GM12878 (cell line): ENCODE measurements at regions of chr17 and their contacts with region 1.

Region 1: DNA sequence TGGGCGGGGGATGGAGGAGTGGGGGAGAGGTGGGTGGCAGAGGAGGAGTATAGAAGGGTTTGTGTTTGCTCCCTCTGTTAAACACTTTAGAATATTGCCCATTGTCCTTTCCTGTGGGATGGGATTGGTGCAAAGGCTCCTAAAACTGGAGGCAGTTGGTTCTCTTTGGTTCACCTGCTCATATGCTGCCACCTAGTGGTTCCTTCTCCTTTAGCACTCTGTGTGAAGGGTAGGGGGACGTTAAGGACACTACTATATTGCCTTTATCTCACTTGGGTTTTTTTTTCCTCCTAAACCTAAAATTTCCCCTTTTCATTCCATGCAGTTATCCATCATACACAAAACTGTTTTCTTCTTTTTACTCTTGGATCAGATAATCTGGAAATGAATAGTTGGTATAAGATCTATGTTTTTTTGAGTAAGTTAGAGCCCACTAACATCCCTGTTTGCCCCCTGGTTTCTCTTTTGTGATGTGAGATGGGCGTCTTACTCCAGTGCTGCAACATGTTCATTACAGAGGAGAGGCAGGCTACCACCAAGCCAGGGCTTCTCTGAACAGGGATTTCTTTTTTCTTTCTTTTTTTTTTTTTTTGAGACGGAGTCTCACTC is 23.8 kb downstream of the SNX11 start:
- DNase-seq: no peak
- ATAC-seq: peak; percentile 91
- H3K4me3 ChIP-seq: no peak overlapping the region
- H3K27ac ChIP-seq: no peak overlapping the region
- H3K4me1 ChIP-seq: no peaks in the 10 kb centered on the region
- H3K27me3 ChIP-seq: no peaks in the 10 kb centered on the region
- CTCF ChIP-seq: peak; percentile 76 to 88 (median 80)
- EP300 ChIP-seq: no peak
- POLR2A ChIP-seq: no peak
- RAD21 ChIP-seq: peak; percentile 91

Region 2: GRCh38 chr17:48101012-48101720 is 30.2 kb before region 1 on chr17 and contains the start of gene CBX1:
- CTCF ChIA-PET with region 1: interaction called, 102 read pairs
- POLR2A ChIA-PET with region 1: no interaction called
- RAD21 ChIA-PET with region 1: interaction called, 6 read pairs
- SMC1A ChIA-PET with region 1: interaction called, 15 read pairs
- in situ Hi-C with region 1: no loop called
- intact Hi-C with region 1: no loop called
- DNase-seq: peak; percentile 89
- ATAC-seq: peak; percentile 98
- H3K4me3 ChIP-seq: peak within 1 kb of the TSS; percentile 87
- H3K27ac ChIP-seq: peak within 1 kb of the TSS; percentile 80
- H3K4me1 ChIP-seq: peaks cover 23% of the 10 kb centered on the region
- H3K27me3 ChIP-seq: no peaks in the 10 kb centered on the region
- CTCF ChIP-seq: no peak
- EP300 ChIP-seq: no peak
- POLR2A ChIP-seq: peak; percentile 74
- RAD21 ChIP-seq: no peak
- polyA plus RNA-seq, gene CBX1: 11.8 to 20.3 TPM

Region 3: DNA sequence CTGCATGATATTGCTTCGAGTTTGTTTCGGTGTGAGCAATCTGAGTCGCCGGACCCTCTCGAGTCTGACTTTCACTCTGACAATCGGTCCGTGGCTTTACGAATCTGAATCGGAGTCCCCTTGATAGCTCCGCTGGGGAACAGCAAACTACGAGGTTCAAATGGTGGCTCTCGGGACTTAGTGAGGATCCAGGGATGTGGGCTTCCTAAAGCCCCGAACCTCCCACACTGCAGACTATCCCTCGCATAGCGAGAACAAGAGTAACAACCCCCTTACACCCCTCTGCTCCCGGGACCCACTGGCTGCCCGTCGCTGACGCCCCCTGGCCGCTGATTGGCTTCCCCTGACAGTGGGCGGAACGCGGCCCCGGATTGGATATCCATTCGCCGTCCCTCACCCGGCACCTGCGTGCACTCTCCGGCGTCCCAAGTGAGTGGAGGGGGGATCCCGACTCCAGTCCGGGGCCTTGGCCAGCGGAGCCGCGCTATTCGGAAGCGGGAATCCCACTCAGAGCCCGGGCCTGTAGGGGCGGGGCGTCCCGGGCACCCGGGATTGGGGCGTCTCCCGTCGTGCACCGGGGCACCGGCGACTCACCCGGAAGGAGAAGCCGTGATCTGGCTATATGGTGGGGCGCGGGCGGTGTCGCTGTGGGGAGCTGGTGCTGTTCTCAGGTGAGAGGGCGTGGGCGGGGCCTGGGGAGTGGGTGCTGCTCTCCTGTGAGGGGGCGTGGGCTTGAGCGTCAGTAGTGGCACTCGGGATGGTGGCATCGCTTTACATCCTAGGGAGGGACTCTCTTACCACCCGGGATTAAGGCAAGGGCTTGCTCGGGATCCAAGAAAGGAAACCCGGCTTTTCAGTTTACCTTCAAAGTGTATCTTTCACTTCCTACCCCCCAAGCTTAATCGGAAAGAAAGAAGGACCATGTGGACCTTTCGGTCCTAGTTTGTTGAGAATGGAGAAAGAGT is 23.9 kb before region 1 on chr17 and contains the start of gene SNX11:
- CTCF ChIA-PET with region 1: interaction called, 102 read pairs
- POLR2A ChIA-PET with region 1: interaction called, 15 read pairs
- RAD21 ChIA-PET with region 1: interaction called, 43 read pairs
- SMC1A ChIA-PET with region 1: interaction called, 42 read pairs
- in situ Hi-C with region 1: no loop called
- intact Hi-C with region 1: no loop called
- DNase-seq: no peak
- ATAC-seq: peak; percentile 88
- H3K4me3 ChIP-seq: peak within 1 kb of the TSS; percentile 97
- H3K27ac ChIP-seq: peak within 1 kb of the TSS; percentile 80
- H3K4me1 ChIP-seq: peaks cover 6% of the 10 kb centered on the region
- H3K27me3 ChIP-seq: no peaks in the 10 kb centered on the region
- CTCF ChIP-seq: peak in 2 of 3 experiments; percentile 7 to 20; a peak in 1 of 6 replicates
- EP300 ChIP-seq: no peak
- POLR2A ChIP-seq: peak; percentile 91
- RAD21 ChIP-seq: no peak
- polyA plus RNA-seq, gene SNX11: 61.3 to 75.6 TPM

Region 4: GRCh38 chr17:48113201-48113676 is 18.1 kb before region 1 on chr17:
- CTCF ChIA-PET with region 1: interaction called, 102 read pairs
- POLR2A ChIA-PET with region 1: interaction called, 15 read pairs
- RAD21 ChIA-PET with region 1: interaction called, 43 read pairs
- SMC1A ChIA-PET with region 1: interaction called, 42 read pairs
- in situ Hi-C with region 1: no loop called
- intact Hi-C with region 1: no loop called
- DNase-seq: peak; percentile 71
- ATAC-seq: peak; percentile 55
- H3K4me3 ChIP-seq: peak overlapping the region; percentile 97
- H3K27ac ChIP-seq: peak overlapping the region; percentile 93
- H3K4me1 ChIP-seq: no peaks in the 10 kb centered on the region; the same call in none of the 2 replicates
- H3K27me3 ChIP-seq: no peaks in the 10 kb centered on the region
- CTCF ChIP-seq: no peak
- EP300 ChIP-seq: no peak
- POLR2A ChIP-seq: peak; percentile 55; the same call in 1 of the 2 replicates
- RAD21 ChIP-seq: no peak

Region 5: GRCh38 chr17:48593840-48594537 is 462.7 kb after region 1 on chr17:
- CTCF ChIA-PET with region 1: interaction called, 13 read pairs
- POLR2A ChIA-PET with region 1: no interaction called
- RAD21 ChIA-PET with region 1: interaction called, 3 read pairs
- SMC1A ChIA-PET with region 1: interaction called, 3 read pairs
- in situ Hi-C with region 1: no loop called
- intact Hi-C with region 1: no loop called
- DNase-seq: no peak
- ATAC-seq: peak; percentile 75
- H3K4me3 ChIP-seq: no peak overlapping the region; the same call in 1 of the 2 replicates
- H3K27ac ChIP-seq: no peak overlapping the region
- H3K4me1 ChIP-seq: peaks cover 10% of the 10 kb centered on the region
- H3K27me3 ChIP-seq: peaks cover 5 to 33% of the 10 kb centered on the region in 2 experiments
- CTCF ChIP-seq: peak; percentile 91 to 97 (median 94)
- EP300 ChIP-seq: no peak
- POLR2A ChIP-seq: no peak
- RAD21 ChIP-seq: peak; percentile 80

Region 6: GRCh38 chr17:48618256-48618897 is 487.1 kb after region 1 on chr17:
- CTCF ChIA-PET with region 1: interaction called, 6 read pairs
- POLR2A ChIA-PET with region 1: no interaction called
- RAD21 ChIA-PET with region 1: interaction called, 3 read pairs
- SMC1A ChIA-PET with region 1: no interaction called
- in situ Hi-C with region 1: no loop called
- intact Hi-C with region 1: loop called (anchors 2 kb)
- DNase-seq: no peak
- ATAC-seq: peak; percentile 88
- H3K4me3 ChIP-seq: no peak overlapping the region
- H3K27ac ChIP-seq: no peak overlapping the region
- H3K4me1 ChIP-seq: no peaks in the 10 kb centered on the region
- H3K27me3 ChIP-seq: peaks cover 36 to 46% of the 10 kb centered on the region in 2 experiments
- CTCF ChIP-seq: peak; percentile 94 to 97 (median 96)
- EP300 ChIP-seq: no peak
- POLR2A ChIP-seq: no peak
- RAD21 ChIP-seq: peak; percentile 85